CD4-positive, alpha-beta memory T cell (primary cell): ENCODE measurements at regions of chr13 and their contacts with region 1.

Region 1: DNA sequence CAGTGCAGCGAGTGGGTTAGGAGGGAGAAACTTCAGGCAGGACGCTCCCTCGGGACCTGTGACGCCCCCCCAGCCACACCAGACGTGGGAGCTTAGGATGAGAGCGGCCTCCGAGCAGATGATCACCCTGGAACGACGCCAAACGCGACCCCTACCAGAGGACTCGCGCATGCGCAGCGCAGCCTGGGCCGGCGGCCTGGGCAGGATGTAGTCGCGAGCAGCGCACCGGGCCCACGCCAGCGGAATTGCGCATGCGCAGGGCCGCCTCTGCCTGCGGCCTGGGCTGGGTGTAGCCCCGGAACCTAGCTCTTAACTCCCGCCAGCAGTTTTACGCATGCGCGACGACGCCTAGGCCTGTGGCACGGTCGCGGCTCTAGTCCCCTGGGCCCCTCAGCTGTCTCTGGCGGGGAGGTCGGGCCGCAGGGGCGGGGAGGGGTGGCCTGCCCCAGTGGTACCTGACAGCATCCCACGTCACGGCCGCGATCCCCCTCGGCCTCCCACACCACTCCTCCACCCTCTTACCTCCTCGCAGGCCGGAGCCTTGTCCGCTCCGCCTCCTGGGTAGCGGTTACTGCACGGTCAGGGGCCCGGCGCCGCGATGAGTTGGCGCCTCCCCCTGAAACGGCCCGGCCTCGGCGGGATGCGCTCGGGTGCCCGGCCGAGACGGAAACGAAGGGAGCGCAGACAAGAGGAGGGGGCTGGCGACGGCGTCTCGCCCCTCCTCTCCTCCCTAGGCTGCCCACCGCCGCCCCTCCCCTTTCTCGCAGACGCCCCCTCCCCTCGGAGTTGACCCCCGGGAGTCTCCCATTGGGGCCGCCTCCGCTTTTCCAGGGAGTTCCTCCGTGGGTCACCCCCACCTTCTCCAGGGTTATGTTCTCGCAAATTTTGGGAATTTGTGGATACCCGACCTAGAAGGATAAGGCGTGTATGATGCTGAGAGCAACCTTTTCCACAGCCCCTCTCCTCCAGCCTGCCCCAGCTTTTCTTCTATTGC is at the start of gene RCBTB2:
- DNase-seq: peak; percentile 97 to 99 (median 98)
- H3K4me3 ChIP-seq: peak within 1 kb of the TSS; percentile 70 to 75
- H3K4me3 Mint-ChIP-seq: peak within 1 kb of the TSS; percentile 92 to 98 (median 94)
- H3K27ac ChIP-seq: peak within 1 kb of the TSS; percentile 92
- H3K27ac Mint-ChIP-seq: peak within 1 kb of the TSS; percentile 97 to 99 (median 99)
- H3K4me1 ChIP-seq: peaks cover 46% of the 10 kb centered on the region
- H3K4me1 Mint-ChIP-seq: peaks cover 20 to 55% (median 36%) of the 10 kb centered on the region in 4 donors
- H3K27me3 ChIP-seq: no peaks in the 10 kb centered on the region
- H3K27me3 Mint-ChIP-seq: no peaks in the 10 kb centered on the region
- total RNA-seq, gene RCBTB2: 23.9 to 25.7 TPM

Region 2: GRCh38 chr13:48334534-48335127 is 198.2 kb before region 1 on chr13:
- CTCF ChIA-PET with region 1: interaction called, 10 read pairs
- POLR2A ChIA-PET with region 1: no interaction called
- intact Hi-C with region 1: no loop called
- DNase-seq: peak in 4 of 5 donors; percentile 50 to 55 (median 52)
- H3K4me3 ChIP-seq: no peak overlapping the region
- H3K4me3 Mint-ChIP-seq: no peak overlapping the region
- H3K27ac ChIP-seq: no peak overlapping the region
- H3K27ac Mint-ChIP-seq: peak overlapping the region in 1 of 7 donors; percentile 13
- H3K4me1 ChIP-seq: peaks cover 8% of the 10 kb centered on the region
- H3K4me1 Mint-ChIP-seq: peaks cover 6 to 16% (median 10%) of the 10 kb centered on the region in 4 donors
- H3K27me3 ChIP-seq: no peaks in the 10 kb centered on the region
- H3K27me3 Mint-ChIP-seq: no peaks in the 10 kb centered on the region

Region 3: GRCh38 chr13:48486362-48486761 is 46.4 kb before region 1 on chr13:
- CTCF ChIA-PET with region 1: no interaction called
- POLR2A ChIA-PET with region 1: interaction called, 10 read pairs
- intact Hi-C with region 1: no loop called
- DNase-seq: no peak
- H3K4me3 ChIP-seq: no peak overlapping the region
- H3K4me3 Mint-ChIP-seq: peak overlapping the region in 6 of 8 donors; percentile 1 to 71 (median 58)
- H3K27ac ChIP-seq: no peak overlapping the region
- H3K27ac Mint-ChIP-seq: peak overlapping the region; percentile 26 to 90 (median 60)
- H3K4me1 ChIP-seq: peaks cover 53% of the 10 kb centered on the region
- H3K4me1 Mint-ChIP-seq: peaks cover 37 to 69% (median 47%) of the 10 kb centered on the region in 4 donors
- H3K27me3 ChIP-seq: no peaks in the 10 kb centered on the region
- H3K27me3 Mint-ChIP-seq: no peaks in the 10 kb centered on the region

Region 4: DNA sequence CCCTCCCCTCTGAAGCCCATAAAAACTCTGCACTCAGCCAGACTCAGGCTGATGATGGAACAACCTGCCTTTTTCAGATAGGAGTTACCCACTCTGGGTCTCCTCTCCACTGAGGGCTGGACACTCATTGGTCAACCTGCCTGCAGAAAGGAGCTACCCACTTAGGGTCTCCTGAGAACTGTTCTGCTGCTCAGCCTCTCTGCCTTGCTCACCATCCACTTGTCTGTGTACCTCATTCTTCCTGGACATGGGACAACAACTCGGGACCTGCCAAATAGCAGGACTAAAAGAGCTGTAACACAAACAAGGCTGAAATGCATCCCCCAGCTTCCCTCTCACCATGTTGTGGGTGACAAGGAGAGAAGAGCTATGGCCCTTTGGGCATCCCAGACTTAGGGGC is 18.5 kb after region 1 on chr13:
- CTCF ChIA-PET with region 1: interaction called, 5 read pairs
- POLR2A ChIA-PET with region 1: interaction called, 17 read pairs
- intact Hi-C with region 1: no loop called
- DNase-seq: no peak
- H3K4me3 ChIP-seq: no peak overlapping the region
- H3K4me3 Mint-ChIP-seq: no peak overlapping the region
- H3K27ac ChIP-seq: no peak overlapping the region
- H3K27ac Mint-ChIP-seq: no peak overlapping the region
- H3K4me1 ChIP-seq: no peaks in the 10 kb centered on the region
- H3K4me1 Mint-ChIP-seq: no peaks in the 10 kb centered on the region
- H3K27me3 ChIP-seq: no peaks in the 10 kb centered on the region
- H3K27me3 Mint-ChIP-seq: no peaks in the 10 kb centered on the region

Region 5: DNA sequence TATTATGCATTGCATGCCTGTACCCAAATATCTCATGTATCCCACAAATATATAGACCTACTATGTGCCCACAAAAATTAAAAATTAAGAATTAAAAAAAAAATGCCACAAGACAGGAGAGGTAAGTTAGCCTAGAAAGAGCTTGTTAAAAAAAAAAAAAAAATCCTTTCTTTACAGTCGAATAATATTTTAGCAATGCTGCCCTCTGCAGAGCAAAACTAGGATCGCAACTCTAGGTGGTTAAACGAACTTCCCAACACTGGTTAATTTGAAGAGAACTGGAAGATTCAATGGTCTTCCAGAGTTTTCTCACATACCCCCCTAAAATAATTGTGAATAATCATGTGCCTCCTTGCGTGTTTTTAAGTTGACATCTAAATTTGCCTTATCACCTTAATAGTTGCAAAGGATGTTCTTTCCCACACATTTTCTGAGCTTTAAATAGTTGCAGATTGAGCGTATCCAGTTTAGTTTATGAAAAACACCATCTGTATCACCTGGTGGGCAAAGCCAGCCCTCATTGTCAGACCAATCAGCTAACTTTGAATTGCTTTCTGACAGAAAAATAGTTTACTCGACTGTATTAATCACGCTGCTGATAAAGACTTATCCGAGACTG is 47.5 kb after region 1 on chr13:
- CTCF ChIA-PET with region 1: interaction called, 36 read pairs
- POLR2A ChIA-PET with region 1: interaction called, 56 read pairs
- intact Hi-C with region 1: no loop called
- DNase-seq: peak; percentile 64 to 74 (median 70)
- H3K4me3 ChIP-seq: no peak overlapping the region
- H3K4me3 Mint-ChIP-seq: peak overlapping the region in 1 of 8 donors; percentile 31
- H3K27ac ChIP-seq: no peak overlapping the region
- H3K27ac Mint-ChIP-seq: peak overlapping the region in 2 of 7 donors; percentile 0 to 43
- H3K4me1 ChIP-seq: peaks cover 19% of the 10 kb centered on the region
- H3K4me1 Mint-ChIP-seq: peaks cover 4 to 28% (median 13%) of the 10 kb centered on the region in 4 donors
- H3K27me3 ChIP-seq: no peaks in the 10 kb centered on the region
- H3K27me3 Mint-ChIP-seq: peaks cover 0 to 4% of the 10 kb centered on the region in 2 donors

Region 6: DNA sequence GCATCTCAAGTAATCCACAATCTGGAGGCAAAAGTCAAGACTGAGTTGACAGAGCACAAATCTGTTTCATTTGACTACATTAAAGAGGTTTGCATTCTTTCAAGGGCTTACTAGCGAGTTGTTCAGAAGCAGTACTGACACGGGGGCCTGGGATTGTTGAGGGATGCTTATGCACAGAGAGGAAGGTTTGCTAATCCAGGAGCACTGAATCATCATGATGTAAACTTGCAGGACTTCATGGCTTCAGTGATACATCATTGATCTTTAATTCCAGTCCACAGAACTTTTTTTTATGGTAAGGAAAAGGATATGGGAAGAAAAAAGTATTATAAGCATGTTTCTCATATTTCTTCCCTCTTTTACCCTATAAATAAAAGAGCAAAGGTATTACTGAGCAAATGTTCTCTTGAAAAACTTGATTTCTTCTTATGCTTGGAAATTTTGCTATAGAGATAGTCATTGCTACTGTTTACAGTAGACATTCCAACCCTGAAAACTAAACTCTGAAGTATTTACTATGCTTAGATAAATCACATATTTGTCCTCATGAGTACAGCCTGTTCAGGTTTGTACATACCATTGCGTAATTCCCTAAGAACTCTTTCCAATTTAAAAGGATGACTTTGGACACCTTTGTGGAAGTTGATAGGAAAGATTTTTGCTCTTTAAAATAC is 1325.5 kb after region 1 on chr13:
- CTCF ChIA-PET with region 1: no interaction called
- POLR2A ChIA-PET with region 1: no interaction called
- intact Hi-C with region 1: no loop called
- DNase-seq: no peak
- H3K4me3 ChIP-seq: no peak overlapping the region
- H3K4me3 Mint-ChIP-seq: no peak overlapping the region
- H3K27ac ChIP-seq: no peak overlapping the region
- H3K27ac Mint-ChIP-seq: no peak overlapping the region
- H3K4me1 ChIP-seq: no peaks in the 10 kb centered on the region
- H3K4me1 Mint-ChIP-seq: no peaks in the 10 kb centered on the region
- H3K27me3 ChIP-seq: no peaks in the 10 kb centered on the region
- H3K27me3 Mint-ChIP-seq: peaks cover 3 to 5% of the 10 kb centered on the region in 2 donors